Right ventricle myocardium inferior (tissue), 1 donor: ENCODE measurements at regions of chr19 and their contacts with region 1.

Region 1: DNA sequence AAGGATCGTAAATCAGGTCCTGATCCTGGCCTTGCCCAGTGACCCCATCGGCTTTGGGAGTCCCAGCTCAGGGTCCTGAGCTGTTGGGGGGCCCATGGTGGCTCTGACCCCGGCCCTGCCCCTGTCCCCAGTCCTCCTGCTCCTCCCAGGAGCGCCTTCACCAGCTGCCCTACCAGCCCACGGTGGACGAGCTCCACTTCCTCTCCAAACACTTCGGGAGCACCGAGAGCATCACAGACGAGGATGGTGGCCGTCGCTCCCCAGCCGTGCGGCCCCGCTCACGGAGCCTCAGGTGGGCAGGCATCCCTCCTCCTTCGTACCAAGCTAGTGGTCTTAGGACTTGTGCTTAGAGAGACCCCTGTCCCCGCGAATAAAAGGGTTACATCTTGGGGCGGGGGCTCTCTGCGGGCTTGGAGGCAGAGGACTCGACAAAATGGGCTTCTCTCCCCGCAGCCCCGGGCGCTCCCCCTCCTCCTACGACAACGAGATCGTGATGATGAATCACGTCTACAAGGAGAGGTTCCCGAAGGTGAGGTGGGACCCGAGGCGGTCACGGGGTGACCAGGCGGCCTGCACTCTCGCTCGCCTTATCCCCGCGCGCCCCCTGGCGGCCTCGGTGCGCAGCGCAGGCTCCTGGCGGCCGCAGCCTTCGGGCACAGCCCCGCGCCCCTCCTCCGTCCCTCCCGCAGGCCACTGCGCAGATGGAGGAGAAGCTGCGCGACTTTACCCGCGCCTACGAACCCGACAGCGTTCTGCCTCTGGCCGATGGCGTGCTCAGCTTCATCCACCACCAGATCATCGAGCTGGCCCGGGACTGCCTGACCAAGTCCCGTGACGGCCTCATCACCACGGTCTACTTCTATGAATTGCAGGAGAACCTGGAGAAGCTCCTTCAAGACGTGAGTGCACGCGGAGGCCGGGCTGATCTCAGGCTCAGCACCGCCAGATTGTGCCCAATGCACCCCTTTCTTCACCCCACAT is 9.1 kb downstream of the MAST1 start:
- DNase-seq: peak; percentile 93
- ATAC-seq: peak; percentile 97

Region 2: DNA sequence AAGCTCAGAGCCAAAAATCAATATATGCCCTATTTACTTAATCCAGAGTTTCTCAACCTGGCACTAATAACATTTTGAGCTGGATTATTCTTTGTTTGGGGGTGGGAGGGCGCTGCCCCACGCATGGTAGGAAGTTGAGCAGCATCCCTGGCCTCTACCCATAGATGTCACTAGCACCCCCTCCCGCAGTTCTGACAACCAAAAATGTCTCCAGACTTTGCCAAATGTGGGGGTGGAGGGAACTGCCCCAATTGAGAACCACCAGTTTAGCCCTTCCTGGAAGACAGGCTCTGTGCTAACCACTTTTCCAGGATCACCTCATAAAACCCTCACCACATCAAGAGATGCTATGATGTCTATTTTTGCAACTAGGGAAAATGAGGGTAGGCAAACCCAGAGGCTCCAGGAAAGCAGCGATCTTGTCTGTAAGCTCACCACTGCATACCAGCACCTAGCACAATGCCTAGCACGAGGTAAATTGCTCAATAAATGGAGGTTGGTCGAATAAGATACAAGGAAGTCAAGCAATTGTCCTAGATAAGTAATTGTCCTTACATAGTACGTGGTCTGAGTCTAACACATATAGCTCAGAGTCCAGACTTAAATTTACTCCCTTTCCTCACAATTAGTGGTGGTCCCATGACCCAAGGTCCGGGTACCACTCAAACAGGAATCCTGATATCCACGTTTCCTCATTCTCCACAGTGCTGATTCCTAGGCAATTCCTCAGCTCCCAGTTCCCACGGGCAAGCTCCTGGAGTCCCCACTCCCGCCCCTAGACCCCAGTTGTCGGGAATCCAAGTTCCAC is 113.9 kb before region 1 on chr19:
- intact Hi-C with region 1: no loop called
- DNase-seq: no peak
- ATAC-seq: no peak

Region 3: GRCh38 chr19:12766051-12766521 is 81.4 kb before region 1 on chr19:
- intact Hi-C with region 1: loop called (anchors 2 kb)
- DNase-seq: peak; percentile 95
- ATAC-seq: peak; percentile 88

Region 4: GRCh38 chr19:12867120-12868099 is 20.0 kb after region 1 on chr19:
- intact Hi-C with region 1: no loop called
- DNase-seq: no peak
- ATAC-seq: peak; percentile 71